ENCODE measurements at regions of chr19 and their contacts with region 1.

Region 1: DNA sequence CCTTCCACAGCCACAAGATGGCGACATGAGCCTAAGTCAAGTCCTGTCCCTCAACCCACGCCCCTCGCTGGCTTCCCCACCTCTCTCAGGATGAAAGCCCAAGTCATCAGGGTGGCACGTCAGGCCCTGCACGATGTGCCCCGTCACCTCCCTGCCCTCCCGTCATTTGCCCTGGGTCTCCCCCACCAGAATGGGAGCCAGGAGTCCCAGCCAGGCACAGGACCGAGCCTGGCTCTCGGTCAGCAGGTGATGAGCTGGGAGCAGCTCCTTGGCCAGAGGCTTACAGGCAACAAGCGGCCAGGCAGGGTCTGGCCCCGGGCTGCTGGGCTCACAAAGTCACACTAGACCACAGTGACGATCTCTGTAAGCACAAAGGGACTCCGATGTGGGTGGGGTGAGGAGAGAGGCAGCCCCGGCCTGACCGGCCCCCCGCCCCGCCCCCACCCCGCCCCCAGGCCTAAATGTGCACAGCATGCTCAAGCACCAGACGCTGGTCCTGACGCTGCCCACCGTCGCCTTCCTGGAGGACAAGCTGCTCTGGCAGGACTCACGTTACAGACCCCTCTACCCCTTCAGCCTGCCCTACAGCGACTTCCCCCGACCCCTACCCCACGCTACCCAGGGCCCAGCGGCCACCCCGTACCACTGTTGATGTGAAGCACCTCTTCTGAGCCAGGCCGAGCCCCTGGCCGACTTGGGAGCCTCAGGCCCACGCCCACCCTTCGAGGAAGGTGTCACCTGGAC is 7.3 kb downstream of the MRPL4 start:
- DNase-seq: peak; percentile 92 to 94
- H3K4me3 ChIP-seq: no peak overlapping the region
- H3K4me3 Mint-ChIP-seq: no peak overlapping the region
- H3K27ac Mint-ChIP-seq: no peak overlapping the region
- H3K4me1 ChIP-seq: peaks cover 27% of the 10 kb centered on the region
- H3K4me1 Mint-ChIP-seq: peaks cover 7% of the 10 kb centered on the region
- H3K27me3 ChIP-seq: no peaks in the 10 kb centered on the region
- H3K27me3 Mint-ChIP-seq: no peaks in the 10 kb centered on the region
- CTCF ChIP-seq: peak; percentile 66 to 75

Region 2: DNA sequence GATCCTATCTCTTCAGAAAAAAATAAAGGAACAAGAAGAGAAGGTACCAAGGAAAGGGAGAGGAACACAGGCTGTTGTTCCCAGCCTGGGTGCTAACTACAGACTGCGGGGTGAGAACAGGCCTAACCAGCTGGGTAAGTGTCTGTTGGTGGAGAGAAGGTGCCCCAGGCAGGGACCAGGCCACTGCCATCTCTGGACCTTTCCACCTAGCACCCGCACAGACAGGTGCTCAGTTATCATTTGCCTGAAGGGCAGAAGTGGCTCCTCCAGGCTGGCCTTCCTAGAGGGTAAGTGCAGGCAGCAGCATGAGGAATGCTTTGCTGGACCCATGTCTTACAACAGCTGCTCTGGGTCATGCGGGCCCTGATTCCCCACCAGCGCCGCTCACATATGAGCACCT is 74.7 kb before region 1 on chr19:
- CTCF ChIA-PET with region 1: no interaction called
- POLR2A ChIA-PET with region 1: no interaction called
- intact Hi-C with region 1: no loop called
- DNase-seq: peak; percentile 32 to 67
- H3K4me3 ChIP-seq: no peak overlapping the region
- H3K4me3 Mint-ChIP-seq: no peak overlapping the region
- H3K27ac Mint-ChIP-seq: peak overlapping the region; percentile 40
- H3K4me1 ChIP-seq: no peaks in the 10 kb centered on the region
- H3K4me1 Mint-ChIP-seq: no peaks in the 10 kb centered on the region
- H3K27me3 ChIP-seq: no peaks in the 10 kb centered on the region
- H3K27me3 Mint-ChIP-seq: no peaks in the 10 kb centered on the region
- CTCF ChIP-seq: no peak

Region 3: GRCh38 chr19:10289167-10289835 is 30.0 kb after region 1 on chr19:
- CTCF ChIA-PET with region 1: interaction called, 12 read pairs
- POLR2A ChIA-PET with region 1: interaction called, 4 read pairs
- intact Hi-C with region 1: no loop called
- DNase-seq: peak; percentile 61 to 78
- H3K4me3 ChIP-seq: peak overlapping the region; percentile 48
- H3K4me3 Mint-ChIP-seq: peak overlapping the region; percentile 87
- H3K27ac Mint-ChIP-seq: peak overlapping the region; percentile 77
- H3K4me1 ChIP-seq: peaks cover 33% of the 10 kb centered on the region
- H3K4me1 Mint-ChIP-seq: peaks cover 24% of the 10 kb centered on the region
- H3K27me3 ChIP-seq: no peaks in the 10 kb centered on the region
- H3K27me3 Mint-ChIP-seq: peaks cover 7% of the 10 kb centered on the region
- CTCF ChIP-seq: no peak

Region 4: DNA sequence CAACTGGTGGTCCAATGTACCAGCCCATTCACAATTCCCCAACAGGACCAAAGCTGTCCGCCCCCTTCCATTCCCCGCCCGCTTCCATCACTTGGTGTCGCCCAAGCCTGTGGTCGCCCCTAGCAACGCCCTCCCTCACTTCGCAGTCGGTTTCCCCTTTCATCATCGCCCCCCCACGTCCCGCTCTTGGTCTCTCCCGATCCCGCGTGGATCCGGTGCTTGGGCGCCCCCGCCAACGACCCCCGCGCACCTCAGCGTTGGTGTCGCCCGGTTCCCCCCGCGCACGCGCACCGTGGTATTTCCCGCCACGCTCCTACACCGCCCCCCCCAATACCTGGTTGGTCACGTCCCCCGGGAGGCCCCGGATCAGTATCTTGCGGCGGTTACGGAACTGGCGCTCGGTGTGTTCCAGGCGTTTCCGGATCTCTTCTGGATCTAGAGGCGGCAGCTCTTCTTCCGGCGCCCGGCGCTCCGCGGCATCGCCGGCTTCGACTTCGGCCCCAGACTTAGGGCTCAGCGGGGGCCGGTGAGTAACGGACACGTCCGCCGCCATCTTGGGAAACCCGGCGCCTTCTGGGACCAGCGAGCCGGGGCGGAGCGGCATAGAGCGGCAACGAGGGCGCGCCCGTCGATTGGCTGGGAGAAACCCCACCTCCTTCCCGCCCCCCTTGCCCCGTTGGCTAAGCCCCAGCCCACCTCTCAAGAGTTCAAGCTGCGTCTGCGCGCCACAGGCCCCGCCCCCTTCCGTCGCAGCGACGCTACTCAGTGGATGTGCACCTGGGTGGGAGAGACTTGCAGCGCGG is 73.8 kb after region 1 on chr19 and contains the start of gene RAVER1:
- CTCF ChIA-PET with region 1: interaction called, 8 read pairs
- POLR2A ChIA-PET with region 1: interaction called, 10 read pairs
- intact Hi-C with region 1: no loop called
- DNase-seq: peak; percentile 96
- H3K4me3 ChIP-seq: peak within 1 kb of the TSS; percentile 79
- H3K4me3 Mint-ChIP-seq: peak within 1 kb of the TSS; percentile 85
- H3K27ac Mint-ChIP-seq: peak within 1 kb of the TSS; percentile 81
- H3K4me1 ChIP-seq: peaks cover 6% of the 10 kb centered on the region; the same call in 1 of the 2 replicates
- H3K4me1 Mint-ChIP-seq: peaks cover 5% of the 10 kb centered on the region
- H3K27me3 ChIP-seq: no peaks in the 10 kb centered on the region
- H3K27me3 Mint-ChIP-seq: no peaks in the 10 kb centered on the region
- CTCF ChIP-seq: no peak
- total RNA-seq, gene RAVER1: 53.9 and 55.1 TPM in 2 replicates

Region 5: GRCh38 chr19:10380313-10381102 is 121.2 kb after region 1 on chr19 and contains the start of gene TYK2:
- CTCF ChIA-PET with region 1: interaction called, 18 read pairs
- POLR2A ChIA-PET with region 1: interaction called, 3 read pairs
- intact Hi-C with region 1: no loop called
- DNase-seq: peak; percentile 97 to 98
- H3K4me3 ChIP-seq: peak within 1 kb of the TSS; percentile 96
- H3K4me3 Mint-ChIP-seq: peak within 1 kb of the TSS; percentile 85
- H3K27ac Mint-ChIP-seq: peak within 1 kb of the TSS; percentile 95
- H3K4me1 ChIP-seq: peaks cover 8% of the 10 kb centered on the region
- H3K4me1 Mint-ChIP-seq: peaks cover 8% of the 10 kb centered on the region
- H3K27me3 ChIP-seq: no peaks in the 10 kb centered on the region
- H3K27me3 Mint-ChIP-seq: no peaks in the 10 kb centered on the region
- CTCF ChIP-seq: no peak
- total RNA-seq, gene TYK2: 124 and 134 TPM in 2 replicates

Region 6: GRCh38 chr19:10388957-10389356 is 129.6 kb after region 1 on chr19:
- CTCF ChIA-PET with region 1: interaction called, 54 read pairs
- POLR2A ChIA-PET with region 1: interaction called, 4 read pairs
- intact Hi-C with region 1: loop called (anchors 1 kb)
- DNase-seq: peak; percentile 82 to 87
- H3K4me3 ChIP-seq: no peak overlapping the region
- H3K4me3 Mint-ChIP-seq: no peak overlapping the region
- H3K27ac Mint-ChIP-seq: peak overlapping the region; percentile 49
- H3K4me1 ChIP-seq: no peaks in the 10 kb centered on the region
- H3K4me1 Mint-ChIP-seq: no peaks in the 10 kb centered on the region
- H3K27me3 ChIP-seq: no peaks in the 10 kb centered on the region
- H3K27me3 Mint-ChIP-seq: no peaks in the 10 kb centered on the region
- CTCF ChIP-seq: peak; percentile 87 to 90

Region 7: DNA sequence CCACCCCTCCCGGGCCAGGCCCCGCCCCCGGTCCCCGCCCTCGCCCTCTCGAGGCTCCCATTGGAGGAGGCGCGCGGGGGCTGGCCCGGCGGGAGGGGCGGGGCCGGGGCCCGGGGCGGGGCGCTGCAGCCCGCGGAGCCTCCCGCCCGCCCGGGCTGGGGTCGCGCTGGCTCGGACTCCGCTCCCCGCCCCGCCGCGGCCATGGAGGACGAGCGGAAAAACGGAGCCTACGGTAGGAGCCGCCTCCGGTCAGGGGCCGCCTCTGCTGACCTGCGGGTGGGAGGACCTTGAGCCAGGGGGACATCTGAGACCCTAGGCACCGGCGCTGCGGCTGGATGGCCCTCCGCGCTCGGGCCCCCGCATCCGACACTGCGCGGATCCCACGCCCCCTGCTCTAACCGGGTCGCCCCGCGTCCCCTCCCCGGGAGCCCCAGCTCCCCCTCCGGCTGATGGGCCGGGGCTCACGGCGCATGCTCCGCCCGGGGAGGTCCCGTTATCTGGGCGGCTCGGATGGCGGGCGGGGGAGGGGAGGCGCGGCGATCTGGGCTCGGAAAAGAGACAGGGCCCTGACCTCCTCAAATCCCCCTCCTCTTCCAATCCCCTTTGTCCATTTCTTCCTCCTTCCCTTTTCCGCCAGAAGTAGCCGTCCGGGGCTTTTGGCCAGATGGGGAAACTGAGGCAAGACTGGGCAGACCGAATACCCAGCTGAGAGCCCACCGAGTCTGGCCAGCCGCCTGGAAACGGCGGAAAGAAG is 343.2 kb after region 1 on chr19:
- CTCF ChIA-PET with region 1: no interaction called
- POLR2A ChIA-PET with region 1: no interaction called
- intact Hi-C with region 1: no loop called
- DNase-seq: peak; percentile 71 to 82
- H3K4me3 ChIP-seq: peak overlapping the region; percentile 72
- H3K4me3 Mint-ChIP-seq: peak overlapping the region; percentile 67
- H3K27ac Mint-ChIP-seq: no peak overlapping the region
- H3K4me1 ChIP-seq: no peaks in the 10 kb centered on the region
- H3K4me1 Mint-ChIP-seq: peaks cover 11% of the 10 kb centered on the region
- H3K27me3 ChIP-seq: no peaks in the 10 kb centered on the region
- H3K27me3 Mint-ChIP-seq: peaks cover 3% of the 10 kb centered on the region
- CTCF ChIP-seq: no peak

Measured in Caco-2 (cell line).